Posterior cingulate gyrus (tissue), 11 donors: ENCODE measurements at regions of chr1 and their contacts with region 1.

Region 1: GRCh38 chr1:72282271-72283021 is at the start of gene NEGR1:
- DNase-seq: peak; percentile 65 to 98 (median 90)

Region 2: GRCh38 chr1:72051538-72051937 is 230.9 kb before region 1 on chr1:
- intact Hi-C with region 1: no loop called
- DNase-seq: no peak

Region 3: DNA sequence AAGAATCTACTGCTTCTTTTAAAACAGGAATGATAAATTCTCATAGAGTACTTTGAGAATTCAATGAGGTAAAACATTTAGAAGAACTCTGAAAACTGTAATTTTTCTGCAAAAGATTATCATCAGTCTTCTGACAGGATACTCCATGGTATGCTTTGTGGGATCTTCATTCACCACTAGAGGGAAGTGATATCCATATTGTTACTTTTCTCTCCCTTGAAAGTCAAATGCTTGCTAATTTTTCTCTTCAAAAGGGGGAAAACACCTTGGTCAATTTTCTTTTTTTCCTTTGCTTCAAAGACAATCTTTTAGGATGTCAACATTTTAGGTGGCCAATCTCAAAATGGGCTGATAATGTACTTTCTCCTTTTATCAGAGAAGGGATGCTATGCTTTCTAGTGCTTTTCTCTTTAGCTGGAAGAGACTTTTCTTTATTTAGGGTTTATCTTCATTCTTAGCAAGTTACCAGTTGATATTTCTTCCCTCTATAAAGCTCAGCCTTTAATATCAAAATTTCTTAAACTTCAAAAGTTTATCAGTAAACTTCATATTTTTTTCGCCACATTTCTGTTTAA is 95.6 kb before region 1 on chr1:
- intact Hi-C with region 1: loop called (anchors 2 kb)
- DNase-seq: no peak

Region 4: GRCh38 chr1:72623299-72623708 is 340.9 kb after region 1 on chr1:
- intact Hi-C with region 1: loop called (anchors 10 kb)
- DNase-seq: no peak